ENCODE measurements at regions of chr11 and their contacts with region 1.

Region 1: DNA sequence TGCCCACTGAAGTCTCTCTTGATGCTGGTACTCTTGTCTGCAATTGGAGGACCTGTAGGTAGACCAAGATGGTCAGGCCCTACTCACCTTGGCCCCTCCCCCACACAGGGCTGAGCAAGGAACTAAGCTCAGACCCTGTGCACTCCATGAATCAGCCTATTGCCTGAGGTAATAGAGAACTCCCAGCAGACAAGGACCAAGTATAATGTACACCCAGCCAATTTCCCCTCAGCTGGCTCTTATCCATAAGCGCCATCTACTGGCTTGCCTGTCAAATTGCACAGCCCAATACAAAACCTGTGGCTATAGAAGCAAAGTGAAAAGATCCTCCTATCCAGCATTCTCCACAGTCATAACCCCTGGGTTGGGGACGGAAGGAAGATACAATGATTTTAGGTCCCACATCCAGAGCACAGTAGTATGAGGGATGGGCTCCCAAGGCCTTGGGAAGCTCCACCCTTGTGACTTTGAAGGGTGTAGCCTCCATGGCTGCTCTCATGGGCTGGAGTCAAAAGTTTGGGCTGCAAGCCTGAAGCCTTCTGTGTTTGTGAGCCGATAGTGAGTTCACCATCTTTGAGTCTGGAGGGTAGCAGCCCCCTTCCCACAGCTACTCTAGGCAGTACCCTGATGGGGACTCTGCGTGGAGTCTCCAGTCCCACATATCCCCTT is 56.0 kb downstream of the GLYATL2 start:
- DNase-seq: peak in 2 of 5 donors; percentile 21 to 29
- ATAC-seq: peak in 3 of 4 donors; percentile 58 to 79 (median 74)
- H3K4me3 ChIP-seq: no peak overlapping the region
- H3K27ac ChIP-seq: no peak overlapping the region
- H3K4me1 ChIP-seq: no peaks in the 10 kb centered on the region
- H3K27me3 ChIP-seq: peaks cover 0 to 10% (median 0%) of the 10 kb centered on the region in 9 donors
- CTCF ChIP-seq: peak; percentile 24 to 71 (median 58)
- POLR2A ChIP-seq: no peak

Region 2: DNA sequence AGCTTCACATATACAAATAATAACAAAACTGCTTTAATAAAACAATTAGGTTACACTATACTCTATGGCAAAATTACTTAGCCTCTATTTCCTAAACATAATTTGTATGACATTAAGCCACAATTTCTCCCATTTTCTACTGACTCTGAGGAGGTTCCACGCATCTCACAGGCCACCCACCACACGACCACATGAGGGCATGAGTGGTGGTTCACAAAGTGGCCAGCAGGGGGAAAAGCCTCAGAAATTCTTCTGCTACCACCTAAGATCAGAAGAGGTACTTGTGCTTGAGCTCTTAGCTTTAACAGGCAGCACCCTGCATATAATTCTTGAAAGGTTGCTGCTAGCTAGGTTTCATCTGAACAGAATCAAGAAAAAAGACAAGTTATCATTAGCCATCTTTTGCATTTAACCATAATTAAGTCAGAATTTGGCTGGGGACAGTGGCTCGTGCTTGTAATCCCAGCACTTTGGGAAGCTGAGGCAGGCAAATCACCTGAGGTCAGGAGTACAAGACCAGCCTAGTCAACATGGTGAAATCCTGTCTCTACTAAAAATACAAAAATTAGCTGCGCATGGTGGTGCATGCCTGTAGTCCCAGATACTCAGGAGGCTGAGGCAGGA is 220.5 kb before region 1 on chr11:
- intact Hi-C with region 1: loop called in 5 of 10 experiments (anchors 5 to 10 kb)
- DNase-seq: peak in 3 of 5 donors; percentile 20 to 44 (median 30)
- ATAC-seq: peak in 2 of 4 donors; percentile 71 to 75
- H3K4me3 ChIP-seq: no peak overlapping the region
- H3K27ac ChIP-seq: no peak overlapping the region
- H3K4me1 ChIP-seq: peaks cover 0 to 24% (median 1%) of the 10 kb centered on the region in 12 donors
- H3K27me3 ChIP-seq: no peaks in the 10 kb centered on the region
- CTCF ChIP-seq: peak; percentile 55 to 84 (median 70)
- POLR2A ChIP-seq: no peak

Region 3: DNA sequence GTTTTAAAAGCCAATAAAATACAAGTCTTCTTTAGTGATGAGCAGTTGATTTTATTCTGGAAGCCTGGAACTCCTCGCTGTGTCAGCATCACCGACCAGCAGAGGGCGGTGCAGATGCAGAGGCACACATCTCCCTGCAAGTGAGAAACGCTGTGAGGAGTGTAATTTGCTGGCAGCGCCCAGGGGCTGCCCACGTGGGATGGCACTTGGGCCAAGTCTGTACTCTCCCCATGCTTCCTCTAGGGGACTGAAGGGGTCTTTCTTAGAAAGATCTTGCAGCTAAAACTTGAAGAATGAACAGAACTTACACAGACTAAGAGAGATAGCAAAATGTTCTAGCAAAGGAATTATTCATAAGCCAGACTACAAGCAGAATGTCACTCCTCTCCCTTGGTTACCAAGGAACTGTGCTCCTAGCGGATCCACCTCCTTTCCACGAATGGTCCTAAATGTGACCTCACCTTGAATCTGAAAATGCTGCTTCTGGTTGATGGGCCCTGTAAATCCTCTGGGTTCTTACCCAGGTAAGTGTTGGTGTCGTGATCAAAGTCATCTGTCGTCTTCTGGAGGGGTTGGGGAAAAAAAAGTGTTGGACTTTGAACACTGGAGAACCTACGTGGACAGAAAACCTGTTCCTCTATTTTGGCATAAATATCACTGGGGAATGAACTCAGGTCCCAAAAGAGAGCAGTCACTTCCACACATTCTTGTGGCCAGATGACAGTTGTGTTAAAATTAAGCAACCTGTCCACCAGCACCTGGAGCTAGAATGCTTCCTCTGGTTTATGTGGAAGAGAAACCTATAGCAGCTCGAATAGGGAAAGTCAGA is 134.2 kb before region 1 on chr11:
- intact Hi-C with region 1: loop called in 2 of 10 experiments (anchors 10 kb)
- DNase-seq: peak; percentile 70 to 89 (median 78)
- ATAC-seq: peak; percentile 79 to 97 (median 92)
- H3K4me3 ChIP-seq: no peak overlapping the region
- H3K27ac ChIP-seq: no peak overlapping the region
- H3K4me1 ChIP-seq: peaks cover 0 to 21% (median 4%) of the 10 kb centered on the region in 12 donors
- H3K27me3 ChIP-seq: no peaks in the 10 kb centered on the region
- CTCF ChIP-seq: peak; percentile 75 to 95 (median 88)
- POLR2A ChIP-seq: no peak

Region 4: DNA sequence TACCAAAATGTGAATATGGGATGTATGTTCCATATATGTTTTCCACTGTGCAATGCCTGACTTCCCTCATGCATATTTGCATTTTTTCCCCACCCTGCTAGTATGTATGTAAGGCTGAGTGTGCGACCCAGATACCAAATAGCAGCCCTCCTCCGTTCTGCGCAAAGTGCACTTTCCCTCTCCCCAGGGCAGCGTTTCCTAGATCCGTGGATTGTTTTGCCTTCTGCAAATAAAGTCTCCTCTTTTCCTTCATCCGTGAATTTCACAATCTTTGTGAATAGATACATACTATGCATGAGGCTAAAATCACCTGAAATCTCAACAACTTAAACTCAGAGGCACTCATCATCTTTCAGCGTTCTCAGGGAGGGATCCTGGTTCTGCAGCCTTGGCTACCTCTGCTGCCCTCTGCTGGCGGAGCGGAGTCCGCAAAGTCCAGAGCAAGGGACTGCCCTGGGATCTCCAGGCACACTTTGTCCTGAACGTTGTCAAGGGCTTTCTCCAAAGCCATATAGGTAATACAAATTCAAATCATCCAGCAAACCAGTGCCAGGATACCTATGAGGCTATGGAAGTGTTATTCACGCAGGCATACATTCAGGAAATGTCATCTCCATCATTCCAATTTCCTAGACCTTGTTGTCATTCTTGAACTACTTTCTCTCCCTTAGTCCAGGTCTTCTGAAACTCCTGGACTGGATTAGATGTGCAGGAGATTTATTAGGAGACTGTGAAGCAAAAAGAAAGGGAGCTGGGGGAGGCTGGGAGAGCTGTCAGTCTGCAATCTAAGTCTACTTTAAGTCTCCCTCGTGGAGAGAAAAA is 112.9 kb before region 1 on chr11:
- intact Hi-C with region 1: loop called in 1 of 10 experiments (anchors 10 kb)
- DNase-seq: peak; percentile 67 to 87 (median 73)
- ATAC-seq: peak; percentile 88 to 93 (median 91)
- H3K4me3 ChIP-seq: no peak overlapping the region
- H3K27ac ChIP-seq: no peak overlapping the region
- H3K4me1 ChIP-seq: no peaks in the 10 kb centered on the region
- H3K27me3 ChIP-seq: peaks cover 0 to 19% (median 3%) of the 10 kb centered on the region in 9 donors
- CTCF ChIP-seq: peak; percentile 83 to 98 (median 90)
- POLR2A ChIP-seq: no peak

Region 5: GRCh38 chr11:58938398-58938797 is 149.9 kb after region 1 on chr11:
- intact Hi-C with region 1: no loop called
- DNase-seq: no peak
- ATAC-seq: no peak
- H3K4me3 ChIP-seq: no peak overlapping the region
- H3K27ac ChIP-seq: no peak overlapping the region
- H3K4me1 ChIP-seq: no peaks in the 10 kb centered on the region
- H3K27me3 ChIP-seq: no peaks in the 10 kb centered on the region
- CTCF ChIP-seq: no peak
- POLR2A ChIP-seq: no peak

Region 6: DNA sequence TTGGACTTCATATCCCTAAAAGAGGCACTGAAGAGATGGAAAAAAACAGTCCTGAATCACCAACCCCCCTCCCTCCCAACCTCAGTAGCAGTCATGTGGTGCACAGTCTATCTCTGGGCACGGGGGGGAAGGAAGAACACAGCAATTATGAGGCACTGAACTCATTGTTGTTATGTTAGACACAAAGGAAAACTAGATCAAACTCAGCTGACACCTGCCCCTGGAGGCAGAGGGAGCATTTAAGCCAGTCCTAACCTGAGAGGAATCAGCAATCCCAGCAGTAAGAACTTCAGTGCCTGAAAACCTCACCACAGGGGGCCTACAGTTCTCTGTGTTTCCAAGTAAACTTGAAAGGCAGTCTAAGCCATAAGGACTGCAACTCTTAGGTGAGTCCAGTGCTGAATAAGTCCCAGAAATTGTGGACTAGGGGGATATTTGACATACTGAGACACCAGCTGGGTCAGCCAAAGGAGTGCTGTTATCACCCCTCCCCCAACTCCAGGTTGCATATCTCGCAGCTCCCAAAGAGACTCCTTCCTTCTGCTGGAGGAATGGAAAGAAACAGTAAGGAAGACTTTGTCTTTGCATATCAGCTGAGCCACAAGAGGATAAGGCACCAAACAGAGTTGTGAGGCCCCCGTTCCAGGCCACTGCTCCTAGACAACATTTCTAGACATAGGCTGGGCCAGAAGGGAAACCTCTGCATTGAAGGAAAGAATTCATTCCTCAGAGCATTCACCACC is 223.3 kb after region 1 on chr11:
- intact Hi-C with region 1: no loop called
- DNase-seq: no peak
- ATAC-seq: no peak
- H3K4me3 ChIP-seq: no peak overlapping the region
- H3K27ac ChIP-seq: no peak overlapping the region
- H3K4me1 ChIP-seq: peaks cover 0 to 16% (median 0%) of the 10 kb centered on the region in 12 donors
- H3K27me3 ChIP-seq: no peaks in the 10 kb centered on the region
- CTCF ChIP-seq: no peak
- POLR2A ChIP-seq: no peak

Measured in heart left ventricle (tissue), 16 donors.